CD8-positive, alpha-beta T cell (primary cell): ENCODE measurements at regions of chr10 and their contacts with region 1.

Region 1: GRCh38 chr10:58299580-58299979 is 30.6 kb downstream of the CISD1 start:
- DNase-seq: peak; percentile 17 to 78 (median 64)
- ATAC-seq: peak; percentile 79
- H3K4me3 ChIP-seq: no peak overlapping the region
- H3K4me3 Mint-ChIP-seq: no peak overlapping the region
- H3K27ac ChIP-seq: no peak overlapping the region
- H3K27ac Mint-ChIP-seq: no peak overlapping the region
- H3K4me1 ChIP-seq: no peaks in the 10 kb centered on the region
- H3K4me1 Mint-ChIP-seq: peaks cover 3% of the 10 kb centered on the region
- H3K27me3 ChIP-seq: no peaks in the 10 kb centered on the region
- H3K27me3 Mint-ChIP-seq: peaks cover 9% of the 10 kb centered on the region
- CTCF ChIP-seq: peak; percentile 95

Region 2: DNA sequence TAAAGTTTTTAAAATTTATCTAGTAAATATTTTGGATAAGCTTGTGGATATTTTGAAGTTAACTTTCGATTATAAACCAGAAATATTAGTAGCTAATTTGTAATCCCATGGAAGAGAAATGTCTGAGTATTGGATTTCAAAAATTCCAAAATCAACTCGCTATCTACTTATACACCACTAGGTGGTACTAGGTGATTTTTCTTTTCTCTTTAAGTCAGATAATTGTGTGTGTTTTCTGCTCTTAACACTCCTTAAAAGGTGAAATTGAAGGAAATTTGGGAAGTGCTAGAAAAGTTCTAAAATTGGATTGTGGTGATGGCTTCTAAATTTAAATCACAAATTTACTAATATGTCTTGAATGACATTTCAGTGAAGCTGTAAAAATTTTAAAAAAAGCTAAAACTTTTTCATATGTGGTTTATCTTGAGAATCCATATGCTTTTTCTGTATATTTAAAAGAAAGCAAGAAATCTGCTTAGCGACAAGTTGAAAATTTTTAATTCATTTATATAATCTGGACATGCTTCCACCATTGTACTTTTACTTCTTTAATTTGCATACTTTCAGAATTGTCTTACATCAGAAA is 122.1 kb before region 1 on chr10:
- CTCF ChIA-PET with region 1: interaction called, 134 read pairs
- POLR2A ChIA-PET with region 1: no interaction called
- intact Hi-C with region 1: no loop called
- DNase-seq: peak in 2 of 9 experiments; percentile 13 to 48
- ATAC-seq: no peak
- H3K4me3 ChIP-seq: no peak overlapping the region
- H3K4me3 Mint-ChIP-seq: no peak overlapping the region
- H3K27ac ChIP-seq: no peak overlapping the region
- H3K27ac Mint-ChIP-seq: no peak overlapping the region
- H3K4me1 ChIP-seq: no peaks in the 10 kb centered on the region
- H3K4me1 Mint-ChIP-seq: no peaks in the 10 kb centered on the region
- H3K27me3 ChIP-seq: no peaks in the 10 kb centered on the region
- H3K27me3 Mint-ChIP-seq: peaks cover 7% of the 10 kb centered on the region
- CTCF ChIP-seq: peak; percentile 71

Region 3: GRCh38 chr10:58334817-58335305 is 35.3 kb after region 1 on chr10 and contains the start of gene UBE2D1:
- CTCF ChIA-PET with region 1: interaction called, 6 read pairs
- POLR2A ChIA-PET with region 1: no interaction called
- intact Hi-C with region 1: loop called in 1 of 2 experiments (anchors 2 kb)
- DNase-seq: peak; percentile 55 to 89 (median 82)
- ATAC-seq: peak; percentile 97
- H3K4me3 ChIP-seq: peak within 1 kb of the TSS; percentile 65 to 87
- H3K4me3 Mint-ChIP-seq: peak within 1 kb of the TSS; percentile 91
- H3K27ac ChIP-seq: peak within 1 kb of the TSS; percentile 34 to 65
- H3K27ac Mint-ChIP-seq: peak within 1 kb of the TSS; percentile 88
- H3K4me1 ChIP-seq: peaks cover 22% of the 10 kb centered on the region
- H3K4me1 Mint-ChIP-seq: peaks cover 38% of the 10 kb centered on the region
- H3K27me3 ChIP-seq: no peaks in the 10 kb centered on the region
- H3K27me3 Mint-ChIP-seq: peaks cover 3% of the 10 kb centered on the region
- CTCF ChIP-seq: no peak
- total RNA-seq, gene UBE2D1: 8.8 to 9.4 TPM

Region 4: GRCh38 chr10:58513188-58514110 is 213.9 kb after region 1 on chr10:
- CTCF ChIA-PET with region 1: no interaction called
- POLR2A ChIA-PET with region 1: no interaction called
- intact Hi-C with region 1: loop called in 1 of 2 experiments (anchors 10 kb)
- DNase-seq: no peak
- ATAC-seq: no peak
- H3K4me3 ChIP-seq: no peak overlapping the region
- H3K4me3 Mint-ChIP-seq: peak overlapping the region; percentile 70
- H3K27ac ChIP-seq: no peak overlapping the region
- H3K27ac Mint-ChIP-seq: no peak overlapping the region
- H3K4me1 ChIP-seq: peaks cover 4% of the 10 kb centered on the region
- H3K4me1 Mint-ChIP-seq: peaks cover 11% of the 10 kb centered on the region
- H3K27me3 ChIP-seq: peaks cover 4 to 9% of the 10 kb centered on the region in 2 experiments
- H3K27me3 Mint-ChIP-seq: peaks cover 34% of the 10 kb centered on the region
- CTCF ChIP-seq: no peak